Colonic mucosa (tissue), 4 donors: ENCODE measurements at regions of chr2 and their contacts with region 1.

Region 1: DNA sequence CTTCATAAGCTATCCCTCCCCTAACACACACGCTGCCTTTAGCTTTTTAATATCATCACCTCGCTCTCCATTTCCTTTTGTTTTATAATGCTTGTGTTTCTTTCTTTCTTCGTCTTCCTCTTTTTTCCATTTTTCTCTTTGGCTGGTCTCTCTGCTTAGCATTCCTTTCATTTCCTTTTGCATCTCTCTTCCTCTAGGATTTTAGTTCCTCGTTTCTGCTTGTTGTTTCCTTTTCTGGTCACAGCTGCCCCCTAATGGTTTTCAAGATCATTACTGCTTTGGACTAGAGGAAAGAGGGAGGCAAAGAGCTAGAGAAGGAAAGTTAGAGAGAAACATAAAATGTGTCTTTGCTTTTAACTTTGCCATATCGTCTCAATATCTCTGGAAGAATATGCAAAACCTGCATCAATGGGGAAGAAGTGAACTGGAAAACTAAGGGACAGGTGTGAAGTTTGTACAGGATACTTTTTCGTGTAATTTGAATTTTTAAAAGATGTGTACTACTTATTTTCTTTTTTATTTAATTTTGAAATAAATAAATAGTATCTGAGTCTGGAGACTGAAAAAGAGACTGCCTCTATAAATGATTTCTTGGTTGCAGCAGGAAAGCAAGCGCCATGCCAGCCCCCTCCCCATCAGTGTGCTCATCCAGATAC is 6.3 kb upstream of the NRP2 start:
- DNase-seq: peak; percentile 60
- H3K4me3 ChIP-seq: no peak overlapping the region
- H3K27ac ChIP-seq: no peak overlapping the region
- H3K4me1 ChIP-seq: no peaks in the 10 kb centered on the region
- H3K27me3 ChIP-seq: no peaks in the 10 kb centered on the region
- CTCF ChIP-seq: peak; percentile 66

Region 2: DNA sequence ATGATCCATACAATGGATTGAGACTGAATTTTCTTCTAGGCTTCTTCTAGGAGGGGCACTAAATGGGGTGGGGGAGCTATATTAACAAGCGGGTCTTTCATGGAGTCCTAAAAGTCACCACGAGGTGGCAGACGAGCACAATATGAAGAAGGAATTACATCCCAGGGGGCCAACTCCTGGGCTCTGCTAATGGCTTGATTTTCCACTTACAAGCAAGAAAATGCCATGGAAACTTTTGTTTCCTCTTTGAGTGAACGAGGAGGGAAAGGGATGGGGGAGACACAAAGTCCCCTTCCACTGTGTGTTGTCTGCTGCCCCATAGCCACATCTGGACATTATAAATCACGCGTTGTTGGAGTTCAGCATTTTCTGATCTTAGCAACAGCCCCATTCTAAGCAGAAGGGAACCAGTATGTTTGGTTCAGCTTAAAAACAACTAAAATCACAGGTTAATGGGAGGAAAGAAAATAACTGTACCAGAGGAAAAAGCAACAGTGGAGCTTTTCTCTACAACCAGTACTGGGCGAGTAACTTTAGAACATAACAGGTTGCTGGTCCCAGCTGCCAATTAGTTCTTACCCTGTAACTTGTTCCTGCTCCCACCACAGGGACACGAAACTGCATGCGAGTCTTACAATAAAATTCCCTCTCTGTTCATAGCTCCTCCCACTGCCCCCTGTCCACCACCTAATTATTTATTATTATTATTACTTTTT is 1415.7 kb before region 1 on chr2:
- intact Hi-C with region 1: loop called (anchors 10 kb)
- DNase-seq: peak; percentile 63
- H3K4me3 ChIP-seq: no peak overlapping the region
- H3K27ac ChIP-seq: no peak overlapping the region
- H3K4me1 ChIP-seq: no peaks in the 10 kb centered on the region
- H3K27me3 ChIP-seq: no peaks in the 10 kb centered on the region
- CTCF ChIP-seq: peak; percentile 57

Region 3: GRCh38 chr2:204325468-204325867 is 1350.5 kb before region 1 on chr2:
- intact Hi-C with region 1: loop called (anchors 10 kb)
- DNase-seq: peak; percentile 74
- H3K4me3 ChIP-seq: no peak overlapping the region
- H3K27ac ChIP-seq: no peak overlapping the region
- H3K4me1 ChIP-seq: no peaks in the 10 kb centered on the region
- H3K27me3 ChIP-seq: no peaks in the 10 kb centered on the region
- CTCF ChIP-seq: peak; percentile 87

Region 4: DNA sequence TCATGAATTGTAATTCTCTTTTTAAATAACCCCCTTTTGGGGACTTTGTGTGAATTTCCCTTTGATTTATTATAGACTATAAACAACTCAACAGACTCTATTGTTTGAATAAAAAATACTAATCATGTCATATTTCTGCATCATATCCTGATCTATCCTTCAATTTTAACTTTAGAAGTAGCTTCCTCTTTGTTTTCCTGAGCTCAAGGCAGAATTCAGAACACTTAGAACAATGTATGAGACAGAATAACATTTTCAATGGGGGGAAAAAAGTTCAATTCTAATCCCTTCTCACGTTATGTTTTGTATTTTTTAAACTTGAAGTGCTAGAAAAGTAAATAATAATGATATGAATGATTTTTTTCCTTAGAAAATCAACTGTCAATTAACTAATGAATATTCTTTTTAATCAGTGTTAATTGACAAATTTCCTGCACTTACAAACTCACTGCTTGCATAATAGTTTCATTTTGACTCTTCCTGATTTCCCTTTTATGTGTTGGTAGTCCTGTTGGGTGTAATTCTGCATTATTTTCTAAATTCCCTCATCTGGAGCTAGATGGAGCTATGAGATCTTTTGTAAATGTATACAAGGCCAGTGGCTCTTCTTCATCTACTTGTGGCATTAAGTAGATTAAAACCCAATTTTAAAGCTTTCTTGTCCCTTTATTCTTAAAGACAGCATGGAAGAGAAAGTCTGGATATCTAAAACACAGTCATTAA is 804.6 kb before region 1 on chr2:
- intact Hi-C with region 1: loop called (anchors 5 kb)
- DNase-seq: no peak
- H3K4me3 ChIP-seq: no peak overlapping the region
- H3K27ac ChIP-seq: no peak overlapping the region
- H3K4me1 ChIP-seq: no peaks in the 10 kb centered on the region
- H3K27me3 ChIP-seq: no peaks in the 10 kb centered on the region
- CTCF ChIP-seq: peak; percentile 19

Region 5: DNA sequence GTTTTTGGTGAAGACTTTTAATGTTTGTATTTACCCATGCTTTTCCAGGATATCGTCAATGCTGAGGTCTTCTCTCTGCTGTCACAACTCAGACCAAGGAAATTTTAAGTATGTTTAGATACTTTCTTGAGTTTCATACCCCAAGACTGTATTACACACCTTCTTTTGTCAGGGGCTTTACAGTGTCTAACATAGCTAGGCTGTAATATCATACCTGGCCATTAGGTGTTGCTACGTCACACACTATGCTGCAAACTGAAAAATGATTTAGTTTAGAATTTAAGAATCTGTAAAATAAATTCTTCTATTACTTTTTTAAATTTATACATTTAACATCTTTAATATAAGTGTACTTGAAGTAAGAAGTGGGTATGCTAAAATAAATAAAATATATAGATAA is 352.1 kb before region 1 on chr2:
- intact Hi-C with region 1: loop called (anchors 5 kb)
- DNase-seq: no peak
- H3K4me3 ChIP-seq: no peak overlapping the region
- H3K27ac ChIP-seq: no peak overlapping the region
- H3K4me1 ChIP-seq: no peaks in the 10 kb centered on the region
- H3K27me3 ChIP-seq: no peaks in the 10 kb centered on the region
- CTCF ChIP-seq: peak; percentile 31